GM18951 (cell line): ENCODE measurements at regions of chr12 and their contacts with region 1.

Region 1: GRCh38 chr12:8088574-8088973 is 6.5 kb downstream of the NECAP1 start:
- POLR2A ChIP-seq: no peak

Region 2: GRCh38 chr12:8045952-8046944 is 42.3 kb before region 1 on chr12:
- in situ Hi-C with region 1: loop called (anchors 5 kb)
- POLR2A ChIP-seq: no peak

Region 3: GRCh38 chr12:8493084-8493483 is 404.5 kb after region 1 on chr12:
- in situ Hi-C with region 1: no loop called
- POLR2A ChIP-seq: no peak